ENCODE measurements at regions of chr1 and their contacts with region 1.

Region 1: DNA sequence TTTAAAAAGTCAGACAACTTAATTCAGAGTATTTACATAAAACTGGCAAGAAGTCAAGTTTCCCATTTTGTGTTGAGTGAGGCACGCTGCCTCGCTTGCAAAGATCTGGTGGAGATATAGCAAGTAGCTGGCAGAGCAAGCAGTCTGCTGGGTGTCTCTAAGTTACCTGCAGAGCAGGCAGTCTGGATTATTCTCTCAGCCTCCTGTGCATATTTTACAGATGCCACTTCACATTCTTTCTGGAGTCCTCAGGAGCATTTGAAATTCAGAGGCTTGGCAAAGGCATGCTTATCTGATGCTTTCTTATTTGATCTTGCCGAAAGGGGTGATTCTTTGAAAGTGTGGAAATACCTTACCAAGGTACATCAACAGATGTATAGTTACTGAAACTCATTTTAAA is 640.4 kb upstream of the ADGRL4 start:
- DNase-seq: no peak
- H3K4me3 ChIP-seq: no peak overlapping the region
- H3K27ac ChIP-seq: no peak overlapping the region
- H3K4me1 ChIP-seq: no peaks in the 10 kb centered on the region
- CTCF ChIP-seq: no peak

Region 2: GRCh38 chr1:79243486-79243885 is 403.4 kb before region 1 on chr1:
- CTCF ChIA-PET with region 1: no interaction called
- POLR2A ChIA-PET with region 1: no interaction called
- intact Hi-C with region 1: no loop called
- DNase-seq: no peak
- H3K4me3 ChIP-seq: no peak overlapping the region
- H3K27ac ChIP-seq: no peak overlapping the region
- H3K4me1 ChIP-seq: no peaks in the 10 kb centered on the region
- CTCF ChIP-seq: no peak

Region 3: GRCh38 chr1:79587229-79587628 is 59.7 kb before region 1 on chr1:
- CTCF ChIA-PET with region 1: no interaction called
- POLR2A ChIA-PET with region 1: no interaction called
- intact Hi-C with region 1: no loop called
- DNase-seq: no peak
- H3K4me3 ChIP-seq: no peak overlapping the region
- H3K27ac ChIP-seq: no peak overlapping the region
- H3K4me1 ChIP-seq: no peaks in the 10 kb centered on the region
- CTCF ChIP-seq: no peak

Region 4: DNA sequence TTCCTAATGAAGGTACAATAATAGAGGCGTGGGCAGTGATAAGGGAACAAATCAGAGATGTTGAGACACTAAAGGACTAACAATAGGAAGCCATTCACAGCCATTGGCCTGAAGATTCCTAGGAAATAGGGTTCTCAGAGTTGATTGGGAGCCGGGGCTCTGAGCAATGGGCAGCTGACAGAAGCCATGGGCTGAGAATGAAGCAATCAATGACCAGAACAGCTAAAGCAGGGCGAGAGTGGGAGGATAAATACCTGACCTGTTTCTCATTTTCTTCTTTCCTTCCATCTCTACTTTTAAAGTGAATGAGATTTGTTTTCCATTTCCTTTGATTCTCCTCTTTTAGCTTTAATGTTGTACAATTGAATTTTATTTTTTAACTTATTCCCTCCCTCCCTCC is 134.4 kb after region 1 on chr1:
- CTCF ChIA-PET with region 1: no interaction called
- POLR2A ChIA-PET with region 1: no interaction called
- intact Hi-C with region 1: no loop called
- DNase-seq: no peak
- H3K4me3 ChIP-seq: no peak overlapping the region
- H3K27ac ChIP-seq: no peak overlapping the region
- H3K4me1 ChIP-seq: peaks cover 28% of the 10 kb centered on the region
- CTCF ChIP-seq: no peak

Region 5: GRCh38 chr1:80427881-80428280 is 781.0 kb after region 1 on chr1:
- CTCF ChIA-PET with region 1: no interaction called
- POLR2A ChIA-PET with region 1: no interaction called
- intact Hi-C with region 1: loop called (anchors 10 kb)
- DNase-seq: no peak
- H3K4me3 ChIP-seq: no peak overlapping the region
- H3K27ac ChIP-seq: no peak overlapping the region
- H3K4me1 ChIP-seq: no peaks in the 10 kb centered on the region
- CTCF ChIP-seq: no peak

Measured in OCI-LY7 (cell line).